Panc1 (cell line): ENCODE measurements at regions of chr2 and their contacts with region 1.

Region 1: DNA sequence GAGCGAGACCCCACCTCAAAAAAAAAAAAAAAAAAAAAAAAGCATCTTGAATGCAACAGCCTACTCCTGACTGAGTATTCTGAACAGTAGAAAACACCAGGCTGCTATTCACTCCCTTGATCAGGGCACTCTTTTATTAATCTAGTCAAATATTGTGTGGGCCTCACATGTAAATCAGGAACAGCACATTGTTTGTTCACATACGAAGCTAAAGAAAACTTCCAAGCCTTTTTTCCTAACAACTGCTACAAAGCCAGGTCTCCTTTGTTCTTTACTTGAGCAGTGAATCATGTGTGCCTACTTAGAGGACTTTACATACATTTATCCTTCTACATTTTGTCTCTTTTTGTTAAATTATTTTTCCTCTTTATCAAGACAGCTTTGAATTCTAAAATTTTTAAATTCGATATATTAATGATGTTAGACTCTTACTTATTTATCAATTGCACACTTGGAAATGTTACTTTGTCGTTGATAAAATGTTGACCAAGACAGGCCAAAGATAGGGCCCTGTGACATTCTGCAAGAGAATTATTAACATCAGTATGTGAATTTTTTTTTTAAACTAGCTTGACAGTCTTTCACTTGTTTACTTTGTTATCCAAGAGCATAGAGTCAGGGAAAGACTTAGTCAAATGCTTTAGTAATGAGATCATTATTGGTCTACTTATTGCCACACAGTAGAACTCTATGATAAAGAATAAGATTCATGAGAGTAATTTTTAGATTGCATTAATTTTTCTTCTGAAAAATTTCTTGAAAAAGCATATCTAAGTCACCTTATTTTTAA is 13.2 kb downstream of the SPATS2L start:
- DNase-seq: no peak
- ATAC-seq: no peak
- H3K4me3 ChIP-seq: no peak overlapping the region
- H3K27ac ChIP-seq: peak overlapping the region; percentile 64
- H3K4me1 ChIP-seq: peaks cover 95% of the 10 kb centered on the region
- H3K27me3 ChIP-seq: no peaks in the 10 kb centered on the region
- CTCF ChIP-seq: no peak

Region 2: GRCh38 chr2:200306196-200306930 is 13.4 kb before region 1 on chr2 and contains the start of gene SPATS2L:
- CTCF ChIA-PET with region 1: interaction called, 11 read pairs
- POLR2A ChIA-PET with region 1: interaction called, 3 read pairs
- in situ Hi-C with region 1: no loop called
- intact Hi-C with region 1: no loop called
- DNase-seq: no peak
- ATAC-seq: peak; percentile 87
- H3K4me3 ChIP-seq: peak within 1 kb of the TSS; percentile 72 to 84
- H3K27ac ChIP-seq: peak within 1 kb of the TSS; percentile 98
- H3K4me1 ChIP-seq: peaks cover 67% of the 10 kb centered on the region
- H3K27me3 ChIP-seq: no peaks in the 10 kb centered on the region
- CTCF ChIP-seq: no peak
- total RNA-seq, gene SPATS2L: 282 TPM

Region 3: GRCh38 chr2:200329798-200330197 is 10.1 kb after region 1 on chr2:
- CTCF ChIA-PET with region 1: no interaction called
- POLR2A ChIA-PET with region 1: interaction called, 10 read pairs
- in situ Hi-C with region 1: no loop called
- intact Hi-C with region 1: no loop called
- DNase-seq: no peak
- ATAC-seq: no peak
- H3K4me3 ChIP-seq: no peak overlapping the region
- H3K27ac ChIP-seq: 0 out of 2 replicates have a peak overlapping the region, but pooled peaks have one; percentile 30
- H3K4me1 ChIP-seq: peaks cover 26% of the 10 kb centered on the region
- H3K27me3 ChIP-seq: no peaks in the 10 kb centered on the region
- CTCF ChIP-seq: no peak

Region 4: DNA sequence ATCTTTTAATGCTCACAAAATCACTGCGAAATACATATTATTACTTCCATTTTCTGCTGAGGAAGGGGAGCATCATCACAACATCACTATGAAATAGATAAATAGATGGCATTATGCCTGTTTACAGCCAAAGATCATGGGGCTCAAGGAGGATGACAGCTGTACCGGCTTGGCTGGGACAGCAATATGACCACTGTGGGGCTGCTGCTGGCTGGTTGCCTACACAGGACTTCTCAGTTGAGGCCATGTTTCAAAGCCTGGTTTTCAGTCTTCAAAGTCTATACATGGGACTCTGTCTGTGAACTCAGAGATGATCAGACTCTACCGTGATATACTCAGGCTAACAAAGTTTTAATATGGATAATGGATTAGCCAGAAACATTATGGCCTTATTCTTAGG is 45.5 kb after region 1 on chr2:
- CTCF ChIA-PET with region 1: no interaction called
- POLR2A ChIA-PET with region 1: no interaction called
- in situ Hi-C with region 1: no loop called
- intact Hi-C with region 1: no loop called
- DNase-seq: no peak
- ATAC-seq: no peak
- H3K4me3 ChIP-seq: no peak overlapping the region
- H3K27ac ChIP-seq: peak overlapping the region; percentile 66
- H3K4me1 ChIP-seq: peaks cover 55% of the 10 kb centered on the region
- H3K27me3 ChIP-seq: no peaks in the 10 kb centered on the region
- CTCF ChIP-seq: no peak

Region 5: GRCh38 chr2:200376513-200377354 is 57.0 kb after region 1 on chr2:
- CTCF ChIA-PET with region 1: no interaction called
- POLR2A ChIA-PET with region 1: interaction called, 10 read pairs
- in situ Hi-C with region 1: no loop called
- intact Hi-C with region 1: no loop called
- DNase-seq: peak; percentile 77
- ATAC-seq: peak; percentile 40
- H3K4me3 ChIP-seq: peak overlapping the region in 1 of 2 experiments; percentile 65; a peak in 2 of 4 replicates
- H3K27ac ChIP-seq: peak overlapping the region; percentile 100
- H3K4me1 ChIP-seq: peaks cover 91% of the 10 kb centered on the region
- H3K27me3 ChIP-seq: no peaks in the 10 kb centered on the region
- CTCF ChIP-seq: no peak

Region 6: GRCh38 chr2:200483729-200484198 is 164.0 kb after region 1 on chr2:
- CTCF ChIA-PET with region 1: no interaction called
- POLR2A ChIA-PET with region 1: no interaction called
- in situ Hi-C with region 1: no loop called
- intact Hi-C with region 1: loop called (anchors 10 kb)
- DNase-seq: peak; percentile 20
- ATAC-seq: peak; percentile 78
- H3K4me3 ChIP-seq: no peak overlapping the region
- H3K27ac ChIP-seq: no peak overlapping the region
- H3K4me1 ChIP-seq: peaks cover 23% of the 10 kb centered on the region
- H3K27me3 ChIP-seq: no peaks in the 10 kb centered on the region
- CTCF ChIP-seq: peak; percentile 80